ENCODE measurements at regions of chr2 and their contacts with region 1.

Region 1: GRCh38 chr2:121530212-121530705 is 421 bp upstream of the RNU4ATAC start:
- DNase-seq: peak; percentile 24
- H3K4me3 ChIP-seq: peak overlapping the region; percentile 80
- H3K27ac ChIP-seq: peak overlapping the region; percentile 100
- H3K27me3 ChIP-seq: no peaks in the 10 kb centered on the region
- CTCF ChIP-seq: no peak

Region 2: GRCh38 chr2:120552800-120553481 is 977.3 kb before region 1 on chr2:
- CTCF ChIA-PET with region 1: no interaction called
- POLR2A ChIA-PET with region 1: no interaction called
- DNase-seq: no peak
- H3K4me3 ChIP-seq: no peak overlapping the region
- H3K27ac ChIP-seq: no peak overlapping the region
- H3K27me3 ChIP-seq: peaks cover 25% of the 10 kb centered on the region
- CTCF ChIP-seq: peak; percentile 63

Region 3: GRCh38 chr2:121068851-121069250 is 461.4 kb before region 1 on chr2:
- CTCF ChIA-PET with region 1: no interaction called
- POLR2A ChIA-PET with region 1: no interaction called
- DNase-seq: no peak
- H3K4me3 ChIP-seq: no peak overlapping the region
- H3K27ac ChIP-seq: no peak overlapping the region
- H3K27me3 ChIP-seq: peaks cover 44% of the 10 kb centered on the region
- CTCF ChIP-seq: no peak

Region 4: DNA sequence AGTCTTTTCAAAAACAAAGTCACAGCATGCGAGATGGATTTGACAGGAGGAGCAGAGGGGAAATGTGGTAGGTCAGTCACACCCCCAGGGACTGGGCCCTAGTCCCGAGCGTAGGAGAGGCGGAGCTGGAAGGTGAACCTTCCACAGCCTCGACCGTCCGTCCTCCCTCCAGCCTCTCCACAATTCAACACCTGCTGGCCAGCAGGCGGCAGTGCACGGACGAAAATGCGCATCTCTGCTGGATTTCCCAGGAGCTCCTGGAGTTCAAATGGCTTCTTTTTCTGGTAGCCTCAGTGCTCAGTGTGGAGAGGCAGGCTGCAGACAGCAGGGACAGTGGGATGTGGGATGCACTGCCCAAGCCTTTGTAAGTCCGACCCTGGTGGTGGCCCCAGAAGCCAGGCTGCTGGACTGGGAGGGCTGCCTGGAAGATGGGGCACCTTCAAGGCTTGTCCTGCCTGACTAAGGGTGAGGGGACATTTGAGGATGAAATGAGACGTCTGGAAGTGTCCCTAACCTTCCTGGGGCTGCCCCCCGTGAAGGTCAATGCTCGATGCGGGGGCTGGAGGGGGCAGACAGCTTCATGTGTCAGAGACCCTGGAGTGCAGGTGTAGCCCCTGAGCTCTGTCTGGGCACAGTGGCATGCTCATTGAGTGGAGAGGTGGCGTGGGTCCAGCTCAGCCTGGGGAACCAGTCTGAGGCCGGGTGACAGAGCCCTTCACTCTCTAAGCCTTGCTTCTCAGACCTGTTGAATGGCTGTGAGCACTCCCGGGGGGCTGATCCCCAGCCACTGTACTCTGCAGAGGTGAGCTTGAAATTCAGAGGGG is 434.8 kb before region 1 on chr2:
- CTCF ChIA-PET with region 1: interaction called, 3 read pairs
- POLR2A ChIA-PET with region 1: interaction called, 10 read pairs
- DNase-seq: no peak
- H3K4me3 ChIP-seq: no peak overlapping the region
- H3K27ac ChIP-seq: no peak overlapping the region
- H3K27me3 ChIP-seq: peaks cover 37% of the 10 kb centered on the region
- CTCF ChIP-seq: peak; percentile 80

Region 5: GRCh38 chr2:121408641-121409040 is 121.6 kb before region 1 on chr2:
- CTCF ChIA-PET with region 1: interaction called, 5 read pairs
- POLR2A ChIA-PET with region 1: interaction called, 14 read pairs
- DNase-seq: no peak
- H3K4me3 ChIP-seq: no peak overlapping the region
- H3K27ac ChIP-seq: no peak overlapping the region
- H3K27me3 ChIP-seq: no peaks in the 10 kb centered on the region
- CTCF ChIP-seq: no peak

Region 6: DNA sequence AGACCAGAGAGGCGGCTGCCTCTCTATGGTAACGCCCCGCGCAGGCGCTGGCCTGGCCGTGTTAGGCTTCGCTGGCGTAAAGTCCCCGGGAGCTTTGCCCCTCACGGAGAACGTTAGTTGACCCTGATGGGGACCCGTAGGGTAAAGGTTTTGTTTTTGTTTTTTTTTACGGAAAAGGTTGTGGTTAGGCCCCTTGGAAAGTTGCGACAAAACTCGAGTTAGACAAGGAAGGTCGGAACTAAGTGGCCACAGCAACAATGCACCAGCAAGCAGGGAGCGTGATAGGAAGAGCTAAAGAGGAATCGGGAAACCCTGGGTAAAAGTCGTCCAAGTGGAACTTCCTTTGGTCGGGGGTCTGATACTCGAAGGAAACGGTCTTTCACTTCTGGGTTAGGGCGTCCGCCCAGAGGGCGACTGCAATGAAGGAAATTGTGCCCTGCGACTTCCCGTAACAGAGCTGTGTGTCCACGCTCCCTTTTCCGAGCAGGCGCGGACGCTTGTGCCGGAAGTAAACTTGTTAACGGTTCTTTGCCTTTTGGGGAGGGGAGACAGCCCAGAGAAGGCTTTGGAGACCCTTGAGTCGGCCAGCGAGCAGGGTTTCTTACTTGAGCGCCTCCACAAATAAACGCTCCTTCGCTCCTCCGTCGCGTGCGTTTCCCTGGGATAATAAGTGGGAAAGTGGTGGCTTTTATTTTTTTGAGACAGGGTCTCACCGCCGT is 119.5 kb after region 1 on chr2:
- CTCF ChIA-PET with region 1: interaction called, 3 read pairs
- POLR2A ChIA-PET with region 1: interaction called, 79 read pairs
- DNase-seq: peak; percentile 90
- H3K4me3 ChIP-seq: peak overlapping the region; percentile 65
- H3K27ac ChIP-seq: peak overlapping the region; percentile 92
- H3K27me3 ChIP-seq: no peaks in the 10 kb centered on the region
- CTCF ChIP-seq: no peak

Region 7: DNA sequence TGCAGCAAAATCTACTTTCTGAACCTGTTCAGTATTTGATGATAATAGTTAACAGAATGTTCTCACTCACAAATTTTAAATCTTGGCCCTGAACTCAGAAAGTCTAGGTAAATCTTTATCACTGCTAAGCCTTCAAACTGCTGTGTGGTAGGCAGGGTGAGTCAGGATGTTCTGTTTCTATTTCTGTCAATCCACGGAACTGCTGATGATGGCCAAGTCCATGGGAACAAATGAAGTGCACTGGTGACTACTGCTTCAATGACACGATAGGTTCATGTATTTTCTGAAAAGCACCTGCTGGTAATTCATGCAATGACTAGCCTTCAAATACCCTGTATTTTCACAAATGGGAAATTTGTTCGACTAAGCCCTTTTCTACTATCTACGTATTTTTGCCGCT is 192.2 kb after region 1 on chr2:
- CTCF ChIA-PET with region 1: interaction called, 8 read pairs
- POLR2A ChIA-PET with region 1: interaction called, 27 read pairs
- DNase-seq: peak; percentile 20
- H3K4me3 ChIP-seq: no peak overlapping the region
- H3K27ac ChIP-seq: peak overlapping the region; percentile 42
- H3K27me3 ChIP-seq: no peaks in the 10 kb centered on the region
- CTCF ChIP-seq: no peak

Region 8: DNA sequence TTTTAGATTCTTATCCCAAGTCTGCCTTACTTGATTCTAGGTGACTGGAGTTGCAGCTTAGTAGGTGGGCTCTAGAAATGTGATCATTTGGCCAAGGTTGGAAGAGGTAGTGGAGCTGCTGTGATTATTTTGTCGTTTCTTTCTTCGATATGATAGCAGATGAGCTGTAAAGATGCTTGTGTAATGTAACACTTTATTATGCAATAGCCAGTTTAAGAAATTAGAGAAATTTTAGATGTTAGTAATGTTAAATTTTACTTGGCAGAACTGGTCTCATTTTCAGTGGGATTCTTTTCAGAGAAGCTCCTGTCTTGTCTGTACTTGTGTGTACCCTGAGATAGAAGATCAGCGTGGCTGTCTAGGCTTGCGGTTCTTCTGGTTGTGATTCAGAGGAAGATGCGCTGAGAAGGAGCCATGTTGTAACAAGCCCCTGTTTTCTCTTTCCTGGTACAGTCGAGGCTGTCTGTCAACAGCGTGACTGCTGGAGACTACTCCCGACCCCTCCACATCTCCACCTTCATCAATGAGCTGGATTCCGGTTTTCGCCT is 234.5 kb after region 1 on chr2:
- CTCF ChIA-PET with region 1: no interaction called
- POLR2A ChIA-PET with region 1: no interaction called
- DNase-seq: no peak
- H3K4me3 ChIP-seq: no peak overlapping the region
- H3K27ac ChIP-seq: no peak overlapping the region
- H3K27me3 ChIP-seq: no peaks in the 10 kb centered on the region
- CTCF ChIP-seq: no peak